Motor neuron (in vitro differentiated cells): ENCODE measurements at regions of chr3 and their contacts with region 1.

Region 1: DNA sequence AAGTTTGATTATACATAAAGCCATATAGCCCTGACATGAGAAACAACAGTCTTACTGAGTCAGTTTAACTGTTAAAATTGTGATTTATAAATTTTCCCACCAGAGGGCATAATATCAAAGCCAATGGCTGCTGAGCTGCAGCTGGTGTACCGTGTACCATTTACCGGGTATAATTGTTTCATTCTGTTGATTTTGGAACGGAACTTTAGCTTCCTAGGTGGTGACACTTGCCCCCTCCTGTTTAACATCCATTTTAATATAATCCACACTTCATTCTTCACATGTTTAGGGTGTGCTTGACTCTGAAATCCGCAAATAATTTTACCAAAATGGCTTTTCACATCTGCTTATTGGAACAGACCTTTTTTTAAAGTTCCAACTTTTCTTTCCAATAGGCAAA is 72.8 kb downstream of the SLC9A9 start:
- ATAC-seq: peak; percentile 48 to 93 (median 78)
- H3K4me3 ChIP-seq: no peak overlapping the region
- H3K27ac ChIP-seq: no peak overlapping the region
- H3K4me1 ChIP-seq: peaks cover 0 to 5% of the 10 kb centered on the region in 2 donors

Region 2: GRCh38 chr3:143507735-143508580 is 267.5 kb before region 1 on chr3:
- in situ Hi-C with region 1: no loop called
- ATAC-seq: peak in 3 of 8 experiments; percentile 72 to 80 (median 76)
- H3K4me3 ChIP-seq: no peak overlapping the region
- H3K27ac ChIP-seq: no peak overlapping the region
- H3K4me1 ChIP-seq: no peaks in the 10 kb centered on the region

Region 3: DNA sequence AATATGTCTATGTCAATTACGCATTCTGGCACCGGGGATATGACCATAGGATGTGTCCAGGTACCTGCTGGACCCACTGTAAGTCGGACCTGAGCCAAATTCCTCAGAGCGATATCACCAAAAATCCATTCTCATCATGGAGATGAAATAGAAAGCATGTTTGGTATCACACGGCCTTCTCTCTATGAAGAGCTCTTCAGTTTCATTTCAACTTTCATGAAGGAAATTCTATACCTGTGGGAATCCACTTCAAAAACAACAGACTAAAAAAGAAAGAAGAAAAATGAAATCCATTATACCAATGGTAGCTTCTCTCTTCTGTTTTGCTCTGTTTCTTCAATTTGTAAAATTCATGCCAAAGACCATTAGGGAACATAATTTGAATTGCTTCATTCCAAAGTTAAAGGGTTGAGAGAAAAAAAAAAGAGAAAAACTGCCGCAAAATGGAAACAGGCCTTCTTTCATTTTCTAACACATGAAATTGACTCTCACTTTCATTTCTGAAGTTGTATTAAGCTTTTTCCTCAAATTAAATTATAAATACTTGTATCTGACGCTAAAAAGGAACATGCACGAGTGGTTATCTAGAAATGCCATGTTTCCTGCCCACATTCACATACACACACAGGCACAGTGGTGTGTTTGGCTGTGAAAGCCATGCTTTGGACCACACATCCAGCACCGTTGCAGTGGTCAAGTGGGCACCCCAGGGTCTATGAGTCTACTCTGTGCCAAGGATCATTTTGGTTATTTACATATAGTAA is 149.2 kb after region 1 on chr3:
- in situ Hi-C with region 1: loop called in 1 of 9 experiments (anchors 25 kb)
- ATAC-seq: no peak
- H3K4me3 ChIP-seq: no peak overlapping the region
- H3K27ac ChIP-seq: no peak overlapping the region
- H3K4me1 ChIP-seq: no peaks in the 10 kb centered on the region

Region 4: DNA sequence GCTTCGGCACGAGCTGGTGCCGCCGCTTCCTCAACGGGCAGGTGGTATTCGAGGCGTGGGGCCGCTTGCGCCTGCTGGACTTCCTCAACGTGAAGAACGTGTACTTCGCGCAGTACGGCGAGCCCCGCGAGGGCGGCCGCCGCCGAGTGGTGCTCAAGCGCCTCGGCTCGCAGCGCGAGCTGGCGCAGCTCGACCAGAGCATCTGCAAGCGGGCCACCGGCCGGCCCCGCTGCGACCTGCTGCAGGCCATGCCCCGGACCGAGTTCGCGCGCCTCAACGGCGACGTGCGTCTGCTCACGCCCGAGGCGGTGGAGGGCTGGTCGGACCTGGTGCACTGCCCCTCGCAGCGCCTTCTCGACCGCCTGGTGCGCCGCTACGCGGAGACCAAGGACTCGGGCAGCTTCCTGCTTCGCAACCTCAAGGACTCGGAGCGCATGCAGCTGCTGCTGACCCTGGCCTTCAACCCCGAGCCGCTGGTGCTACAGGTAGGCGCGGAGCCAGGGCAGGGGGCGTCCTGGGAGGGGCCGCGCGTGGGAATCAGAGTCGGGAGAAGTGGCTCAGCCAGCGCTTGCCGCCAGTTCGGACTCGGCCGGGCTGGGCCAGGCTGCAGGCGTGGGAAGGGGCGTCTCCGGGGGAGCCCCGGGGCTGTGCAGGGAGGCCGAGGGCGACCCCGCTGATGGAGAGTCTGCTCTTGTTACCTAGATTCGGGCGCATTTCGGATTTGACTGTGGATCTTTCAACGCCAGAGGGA is 197.2 kb after region 1 on chr3:
- in situ Hi-C with region 1: loop called in 2 of 9 experiments (anchors 25 kb)
- ATAC-seq: peak; percentile 17 to 45 (median 38)
- H3K4me3 ChIP-seq: peak overlapping the region; percentile 57 to 82 (median 63)
- H3K27ac ChIP-seq: peak overlapping the region; percentile 91 to 93
- H3K4me1 ChIP-seq: peaks cover 0 to 3% of the 10 kb centered on the region in 2 donors

Region 5: GRCh38 chr3:144085979-144086378 is 310.5 kb after region 1 on chr3:
- in situ Hi-C with region 1: no loop called
- ATAC-seq: peak in 1 of 8 experiments; percentile 27
- H3K4me3 ChIP-seq: no peak overlapping the region
- H3K27ac ChIP-seq: no peak overlapping the region
- H3K4me1 ChIP-seq: peaks cover 0 to 4% of the 10 kb centered on the region in 2 donors